ENCODE measurements at regions of chr12 and their contacts with region 1.

Region 1: GRCh38 chr12:30847259-30847658 is 79.3 kb upstream of the TSPAN11 start:
- DNase-seq: no peak
- ATAC-seq: no peak

Region 2: DNA sequence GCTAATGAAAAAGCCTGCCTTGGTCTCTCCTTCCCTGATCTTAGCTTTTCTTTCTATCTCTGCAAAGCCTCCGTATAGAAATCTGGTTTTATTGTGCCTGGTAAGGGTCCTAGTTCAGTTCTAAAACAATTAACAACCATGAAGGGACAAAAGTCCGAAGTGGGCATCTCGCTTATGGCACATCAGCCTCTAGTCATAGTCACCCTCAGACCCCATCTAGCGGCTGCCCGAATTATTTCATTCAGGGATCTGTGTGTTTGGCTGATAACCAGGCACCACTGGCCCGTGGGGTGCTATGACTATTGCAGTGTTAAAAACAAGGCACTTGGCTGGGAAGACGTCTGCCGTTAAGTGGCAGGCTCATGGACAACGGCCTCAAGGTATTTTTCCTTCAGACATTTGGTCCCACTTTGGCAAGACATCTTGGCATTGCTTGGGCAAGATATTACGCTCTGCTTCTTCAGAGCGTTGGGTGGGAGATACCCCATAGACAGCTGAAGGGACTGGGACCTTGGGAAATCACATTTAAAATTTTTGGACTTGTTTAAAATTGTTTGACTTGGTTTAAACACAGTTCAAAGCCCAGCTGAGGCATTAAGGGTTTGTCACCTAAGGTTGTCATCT is 391.6 kb after region 1 on chr12:
- intact Hi-C with region 1: loop called (anchors 10 kb)
- DNase-seq: no peak
- ATAC-seq: peak; percentile 68

Region 3: GRCh38 chr12:31274520-31275300 is 427.5 kb after region 1 on chr12:
- intact Hi-C with region 1: loop called (anchors 5 kb)
- DNase-seq: no peak
- ATAC-seq: no peak

Measured in Right ventricle myocardium inferior (tissue), 1 donor.